Activated CD8-positive, alpha-beta memory T cell treated with anti-CD3 and anti-CD28 coated beads, Interleukin-2, amount 10 ng/mL, durations not matched to agents 7 days and 5 days (primary cell): ENCODE measurements at regions of chr6 and their contacts with region 1.

Region 1: DNA sequence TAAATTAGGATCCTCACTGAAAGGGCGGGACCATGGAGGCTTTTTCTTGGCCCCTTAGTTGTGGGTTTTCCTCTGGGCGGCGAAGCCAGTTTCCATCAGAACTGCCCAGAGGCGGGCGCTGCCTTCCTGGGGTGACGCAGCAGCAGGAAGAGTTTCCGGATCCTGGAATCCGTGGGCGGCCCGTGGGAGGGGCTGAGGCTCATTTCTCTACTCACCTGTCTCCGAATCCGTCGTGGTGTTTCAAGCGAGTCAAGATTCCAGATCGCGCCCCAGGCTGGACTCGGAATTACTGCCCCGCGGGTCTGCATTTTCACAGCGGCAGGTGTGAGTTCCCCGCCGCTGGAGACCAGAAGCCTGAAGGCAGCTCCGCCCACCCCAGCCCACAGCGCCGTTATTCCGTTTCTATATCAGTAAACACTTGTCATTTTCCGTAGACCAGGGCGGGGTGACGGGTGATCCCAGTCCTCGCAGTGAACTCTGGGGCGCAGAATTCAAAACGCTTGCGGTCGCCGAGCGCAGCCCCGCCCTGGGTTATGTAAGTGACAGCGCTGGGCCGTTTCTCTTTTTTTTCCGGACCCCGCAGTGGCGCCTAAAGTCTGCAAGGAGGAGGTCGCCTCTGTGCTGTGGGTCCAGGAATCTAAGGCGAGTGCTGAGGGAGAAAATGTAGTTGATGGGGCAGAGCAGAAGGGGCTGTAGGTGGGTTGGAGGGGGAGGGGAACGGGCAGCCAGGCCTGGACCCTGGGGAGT is 27.2 kb upstream of the POU5F1 start:
- DNase-seq: peak; percentile 98
- ATAC-seq: peak; percentile 78
- H3K4me3 Mint-ChIP-seq: peak overlapping the region; percentile 75
- H3K27ac Mint-ChIP-seq: peak overlapping the region; percentile 99
- H3K4me1 Mint-ChIP-seq: peaks cover 50% of the 10 kb centered on the region
- H3K27me3 Mint-ChIP-seq: no peaks in the 10 kb centered on the region

Region 2: DNA sequence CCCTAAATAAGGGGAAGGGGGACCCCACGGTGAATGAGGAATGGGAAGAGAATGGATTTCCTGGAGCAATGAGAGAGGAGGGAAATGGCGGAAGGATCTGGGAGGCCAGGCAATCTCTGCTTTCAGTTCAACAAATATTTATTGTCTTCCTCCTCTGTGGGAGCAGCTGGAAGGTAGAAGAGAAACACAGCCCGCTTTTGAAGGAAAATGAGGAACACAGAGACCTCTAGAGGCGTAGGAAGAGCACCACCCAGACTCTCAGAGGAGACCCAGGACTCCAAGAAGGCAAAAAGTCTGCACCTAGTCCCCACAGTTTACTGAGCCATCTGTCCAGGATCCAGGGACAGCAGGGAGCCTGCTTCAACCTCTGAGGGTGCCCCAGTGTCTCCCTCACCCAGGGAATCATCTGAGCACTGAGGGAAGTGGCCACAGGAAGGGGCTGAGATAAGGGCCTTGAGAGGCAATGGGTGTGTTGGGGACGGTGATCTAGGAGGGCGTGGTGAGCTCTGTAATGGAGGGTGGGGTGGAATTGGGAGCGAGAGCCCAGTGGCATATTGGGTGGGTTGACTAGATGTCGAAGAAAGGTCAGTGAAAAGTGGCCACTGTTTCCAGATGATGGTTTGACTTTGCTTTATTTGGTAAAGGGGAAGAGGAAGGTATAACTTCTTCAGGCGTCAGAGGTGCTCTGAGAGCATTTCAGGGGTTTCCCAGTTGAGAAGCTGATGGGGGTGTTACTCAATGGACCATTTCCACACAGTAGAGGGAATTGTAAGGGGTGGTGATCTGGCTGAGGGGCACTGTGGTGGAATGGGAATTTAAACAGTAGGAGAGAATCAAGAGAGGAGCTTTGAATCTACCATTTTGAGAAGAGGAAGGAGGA is 82.5 kb before region 1 on chr6:
- CTCF ChIA-PET with region 1: no interaction called
- DNase-seq: no peak
- ATAC-seq: no peak
- H3K4me3 Mint-ChIP-seq: no peak overlapping the region
- H3K27ac Mint-ChIP-seq: no peak overlapping the region
- H3K4me1 Mint-ChIP-seq: no peaks in the 10 kb centered on the region
- H3K27me3 Mint-ChIP-seq: peaks cover 36% of the 10 kb centered on the region

Region 3: DNA sequence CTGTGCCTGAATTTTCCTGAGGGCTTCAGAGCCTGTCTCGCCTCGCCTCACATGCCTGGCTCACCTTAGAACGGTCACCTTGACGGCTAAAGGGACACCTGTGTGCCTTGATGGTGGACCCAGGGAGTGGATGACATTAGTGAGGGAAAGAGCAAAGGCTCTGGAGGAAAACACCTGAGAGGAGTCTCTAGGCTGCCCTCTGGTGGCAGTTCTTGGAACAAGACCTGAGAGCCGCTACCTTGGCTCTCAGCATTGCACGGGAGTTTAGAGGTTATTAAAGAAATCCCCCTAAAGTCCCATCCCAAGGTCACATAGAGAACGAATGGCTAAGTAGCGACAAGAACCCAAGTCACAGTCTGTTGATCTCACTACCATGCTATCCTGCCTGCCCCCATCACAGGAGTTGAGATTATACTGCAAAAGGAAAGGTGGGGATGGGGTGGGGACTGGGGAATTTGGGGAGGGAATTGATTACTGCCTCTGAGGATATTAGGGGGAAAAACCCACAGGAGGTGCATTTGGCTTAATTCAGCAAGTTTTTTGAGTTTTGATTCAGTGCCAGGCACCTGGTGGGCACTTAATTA is 69.5 kb before region 1 on chr6:
- CTCF ChIA-PET with region 1: interaction called, 13 read pairs
- DNase-seq: peak; percentile 82
- ATAC-seq: peak; percentile 80
- H3K4me3 Mint-ChIP-seq: no peak overlapping the region
- H3K27ac Mint-ChIP-seq: no peak overlapping the region
- H3K4me1 Mint-ChIP-seq: no peaks in the 10 kb centered on the region
- H3K27me3 Mint-ChIP-seq: peaks cover 18% of the 10 kb centered on the region

Region 4: DNA sequence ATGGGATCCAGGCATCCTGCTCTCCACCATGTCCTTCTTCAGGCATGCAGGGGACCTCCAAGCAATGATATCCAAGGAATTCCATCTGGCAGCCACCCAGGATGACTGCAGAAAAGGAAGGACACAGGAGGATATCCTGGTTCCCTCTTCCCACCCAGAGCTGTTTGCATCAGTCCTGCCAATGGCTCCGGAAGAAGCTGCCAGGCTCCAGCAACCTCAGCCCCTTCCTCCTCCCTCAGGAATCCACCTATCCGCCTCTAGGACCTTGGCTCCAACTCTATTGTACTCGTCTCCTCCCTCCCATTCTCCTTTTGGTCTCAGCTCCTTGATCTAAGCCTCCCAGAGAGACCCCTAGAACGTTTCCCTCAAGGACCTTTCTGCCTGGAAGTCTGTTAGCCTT is 58.1 kb before region 1 on chr6:
- CTCF ChIA-PET with region 1: interaction called, 80 read pairs
- DNase-seq: no peak
- ATAC-seq: no peak
- H3K4me3 Mint-ChIP-seq: no peak overlapping the region
- H3K27ac Mint-ChIP-seq: no peak overlapping the region
- H3K4me1 Mint-ChIP-seq: peaks cover 4% of the 10 kb centered on the region
- H3K27me3 Mint-ChIP-seq: no peaks in the 10 kb centered on the region

Region 5: DNA sequence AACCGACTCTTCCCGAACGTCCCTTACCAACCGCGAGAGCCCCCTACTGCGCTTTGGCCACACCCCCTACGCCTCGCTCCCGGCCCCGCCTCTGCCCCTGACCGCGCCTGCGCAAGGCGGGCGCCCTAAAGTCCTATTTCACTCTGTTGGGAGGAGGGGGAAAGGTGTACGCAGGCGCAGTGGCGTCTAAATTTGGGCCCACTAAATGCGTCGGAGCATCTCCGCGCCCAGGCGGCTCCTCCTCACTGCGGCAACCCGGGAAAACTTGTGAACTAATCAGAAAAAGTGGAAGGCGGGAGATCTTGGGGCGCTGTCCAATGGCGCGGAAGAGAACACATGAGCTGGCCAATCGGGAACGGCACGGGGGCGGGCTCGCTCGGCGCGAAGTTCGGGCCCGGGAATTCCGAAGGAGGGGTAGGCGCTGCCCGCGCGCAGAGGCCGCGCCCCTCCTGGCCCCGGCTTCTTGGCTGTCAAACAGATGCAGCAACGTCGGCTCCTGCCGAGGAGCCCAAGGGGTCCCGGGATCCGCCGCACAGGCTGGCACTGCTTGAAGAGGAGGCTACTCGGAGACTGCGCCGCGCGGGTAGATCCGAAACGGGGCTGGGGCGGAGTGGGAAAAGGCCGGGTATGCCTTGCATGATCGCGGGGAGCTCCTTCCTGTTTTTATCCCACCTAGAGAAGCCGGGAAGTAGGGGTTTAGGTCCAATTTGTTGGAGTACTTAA is 39.4 kb before region 1 on chr6 and contains the start of gene TCF19:
- CTCF ChIA-PET with region 1: interaction called, 12 read pairs
- DNase-seq: peak; percentile 100
- ATAC-seq: peak; percentile 92
- H3K4me3 Mint-ChIP-seq: peak within 1 kb of the TSS; percentile 99
- H3K27ac Mint-ChIP-seq: peak within 1 kb of the TSS; percentile 84
- H3K4me1 Mint-ChIP-seq: peaks cover 42% of the 10 kb centered on the region
- H3K27me3 Mint-ChIP-seq: no peaks in the 10 kb centered on the region
- total RNA-seq, gene TCF19: 100 to 106 TPM